CD4-positive, alpha-beta T cell (primary cell): ENCODE measurements at regions of chr2 and their contacts with region 1.

Region 1: DNA sequence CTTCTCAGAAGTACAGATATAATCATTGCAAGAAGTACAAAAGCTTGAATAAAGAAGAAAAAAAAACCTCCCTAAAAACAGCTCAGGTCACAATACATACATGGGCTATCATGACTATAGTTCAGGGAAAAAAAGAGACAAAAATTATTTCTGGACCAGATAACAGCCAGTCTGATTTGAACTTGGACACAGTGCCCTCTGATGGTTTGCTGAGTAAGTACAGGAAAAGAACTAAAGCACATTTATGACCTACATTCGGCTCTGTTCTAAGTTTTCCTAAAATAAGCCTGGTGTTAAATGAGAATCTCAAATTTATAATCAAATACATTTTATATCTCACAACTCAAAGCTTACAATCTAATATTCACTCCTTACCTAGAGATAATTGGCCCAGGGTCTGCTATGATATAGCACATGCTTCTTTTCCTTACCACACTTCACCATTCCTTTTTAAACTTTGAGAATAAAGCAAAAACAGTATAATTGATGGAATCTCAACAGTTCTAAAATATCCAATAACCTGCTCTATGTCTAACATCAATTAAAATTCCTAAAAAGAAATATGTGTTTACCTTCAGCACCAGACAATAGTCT is 81.1 kb downstream of the RAPH1 start:
- DNase-seq: peak in 6 of 14 experiments; percentile 11 to 69 (median 46)
- ATAC-seq: peak; percentile 52
- H3K4me3 ChIP-seq: no peak overlapping the region
- H3K4me3 Mint-ChIP-seq: no peak overlapping the region
- H3K27ac ChIP-seq: no peak overlapping the region
- H3K27ac Mint-ChIP-seq: no peak overlapping the region
- H3K4me1 ChIP-seq: no peaks in the 10 kb centered on the region
- H3K4me1 Mint-ChIP-seq: peaks cover 4% of the 10 kb centered on the region
- H3K27me3 ChIP-seq: no peaks in the 10 kb centered on the region
- H3K27me3 Mint-ChIP-seq: no peaks in the 10 kb centered on the region
- CTCF ChIP-seq: peak; percentile 73

Region 2: GRCh38 chr2:202824901-202825300 is 629.1 kb before region 1 on chr2:
- CTCF ChIA-PET with region 1: no interaction called
- POLR2A ChIA-PET with region 1: no interaction called
- intact Hi-C with region 1: loop called (anchors 5 to 10 kb)
- DNase-seq: no peak
- ATAC-seq: no peak
- H3K4me3 ChIP-seq: no peak overlapping the region
- H3K4me3 Mint-ChIP-seq: no peak overlapping the region
- H3K27ac ChIP-seq: no peak overlapping the region
- H3K27ac Mint-ChIP-seq: no peak overlapping the region
- H3K4me1 ChIP-seq: no peaks in the 10 kb centered on the region
- H3K4me1 Mint-ChIP-seq: no peaks in the 10 kb centered on the region
- H3K27me3 ChIP-seq: no peaks in the 10 kb centered on the region
- H3K27me3 Mint-ChIP-seq: no peaks in the 10 kb centered on the region
- CTCF ChIP-seq: no peak

Region 3: DNA sequence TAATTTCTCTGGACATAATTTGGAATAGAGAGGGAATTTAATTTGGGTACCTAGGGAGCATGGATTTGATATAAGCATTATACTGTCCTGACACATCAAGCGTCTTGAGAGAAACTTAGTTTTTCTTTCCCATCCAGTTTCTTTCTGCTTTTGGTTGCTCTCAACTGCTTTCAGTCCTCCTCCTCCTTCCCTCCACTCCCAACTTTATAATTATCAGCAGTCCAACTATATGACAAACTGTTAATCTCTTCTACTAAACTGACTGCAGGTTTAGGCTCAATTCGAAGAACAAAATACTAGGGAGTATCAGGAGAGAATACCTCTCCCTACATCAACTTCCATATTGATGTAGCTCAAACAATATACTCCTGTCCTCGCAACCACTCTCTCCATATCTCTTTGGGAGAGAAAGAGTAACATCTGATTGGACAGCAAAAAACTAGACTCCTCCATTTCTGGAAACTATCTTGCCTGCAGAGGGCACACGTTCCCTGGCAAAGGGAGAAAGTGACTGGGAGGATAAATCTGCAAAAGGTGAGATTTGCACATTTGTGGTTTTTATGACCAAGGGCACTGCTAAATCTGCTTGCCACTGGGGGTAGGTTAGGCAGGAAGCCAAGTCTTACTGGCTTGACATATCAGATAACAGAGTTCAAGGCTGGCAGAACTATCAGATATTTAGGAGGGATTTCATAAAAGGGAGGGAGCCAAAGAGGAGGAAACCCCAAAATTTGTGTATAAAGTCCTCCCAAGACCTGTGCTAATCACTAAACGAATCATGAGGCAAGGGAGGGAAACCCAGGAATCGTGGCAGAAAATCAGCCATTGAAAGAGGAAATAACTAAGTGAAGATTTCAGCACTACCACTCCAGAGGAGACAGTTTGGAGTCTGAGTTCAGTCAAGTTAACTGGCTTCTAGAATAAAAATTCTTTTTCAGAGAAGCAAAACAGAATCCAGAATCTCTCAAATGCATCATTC is 622.4 kb before region 1 on chr2:
- CTCF ChIA-PET with region 1: no interaction called
- POLR2A ChIA-PET with region 1: no interaction called
- intact Hi-C with region 1: loop called (anchors 5 to 10 kb)
- DNase-seq: peak in 13 of 14 experiments; percentile 6 to 71 (median 18)
- ATAC-seq: peak; percentile 73
- H3K4me3 ChIP-seq: no peak overlapping the region
- H3K4me3 Mint-ChIP-seq: peak overlapping the region; percentile 46
- H3K27ac ChIP-seq: no peak overlapping the region
- H3K27ac Mint-ChIP-seq: no peak overlapping the region
- H3K4me1 ChIP-seq: peaks cover 6% of the 10 kb centered on the region
- H3K4me1 Mint-ChIP-seq: peaks cover 17% of the 10 kb centered on the region
- H3K27me3 ChIP-seq: no peaks in the 10 kb centered on the region
- H3K27me3 Mint-ChIP-seq: no peaks in the 10 kb centered on the region
- CTCF ChIP-seq: peak; percentile 64

Region 4: GRCh38 chr2:203225423-203226039 is 228.4 kb before region 1 on chr2:
- CTCF ChIA-PET with region 1: no interaction called
- POLR2A ChIA-PET with region 1: no interaction called
- intact Hi-C with region 1: loop called (anchors 2 to 10 kb)
- DNase-seq: peak in 10 of 14 experiments; percentile 8 to 68 (median 20)
- ATAC-seq: peak; percentile 94
- H3K4me3 ChIP-seq: no peak overlapping the region
- H3K4me3 Mint-ChIP-seq: no peak overlapping the region
- H3K27ac ChIP-seq: no peak overlapping the region
- H3K27ac Mint-ChIP-seq: no peak overlapping the region
- H3K4me1 ChIP-seq: no peaks in the 10 kb centered on the region
- H3K4me1 Mint-ChIP-seq: no peaks in the 10 kb centered on the region
- H3K27me3 ChIP-seq: no peaks in the 10 kb centered on the region
- H3K27me3 Mint-ChIP-seq: no peaks in the 10 kb centered on the region
- CTCF ChIP-seq: peak; percentile 74